Activated CD4-positive, alpha-beta T cell treated with anti-CD3 and anti-CD28 coated beads, Interleukin-2, amount 10 ng/mL, durations not matched to agents 24 days and 14 days (primary cell): ENCODE measurements at regions of chr19 and their contacts with region 1.

Region 1: GRCh38 chr19:55062734-55063492 is at the start of gene RDH13:
- DNase-seq: peak; percentile 99
- H3K4me3 Mint-ChIP-seq: peak within 1 kb of the TSS; percentile 89
- H3K27ac Mint-ChIP-seq: peak within 1 kb of the TSS; percentile 77
- H3K4me1 Mint-ChIP-seq: peaks cover 20% of the 10 kb centered on the region
- H3K27me3 Mint-ChIP-seq: peaks cover 27% of the 10 kb centered on the region
- total RNA-seq, gene RDH13: 21.7 and 23.2 TPM in 2 replicates

Region 2: GRCh38 chr19:55080968-55081772 is 18.3 kb after region 1 on chr19:
- intact Hi-C with region 1: loop called (anchors 1 kb)
- DNase-seq: peak; percentile 98
- H3K4me3 Mint-ChIP-seq: peak overlapping the region; percentile 85
- H3K27ac Mint-ChIP-seq: peak overlapping the region; percentile 89
- H3K4me1 Mint-ChIP-seq: peaks cover 17% of the 10 kb centered on the region
- H3K27me3 Mint-ChIP-seq: peaks cover 37% of the 10 kb centered on the region